Aorta (tissue), 5 donors: ENCODE measurements at regions of chr10 and their contacts with region 1.

Region 1: GRCh38 chr10:29535012-29535777 is 99.6 kb downstream of the SVIL start:
- DNase-seq: peak; percentile 63 to 82
- ATAC-seq: peak; percentile 61
- H3K4me3 ChIP-seq: no peak overlapping the region
- H3K27ac ChIP-seq: peak overlapping the region in 1 of 2 donors; percentile 73
- H3K4me1 ChIP-seq: peaks cover 0 to 11% of the 10 kb centered on the region in 2 donors
- H3K27me3 ChIP-seq: no peaks in the 10 kb centered on the region

Region 2: DNA sequence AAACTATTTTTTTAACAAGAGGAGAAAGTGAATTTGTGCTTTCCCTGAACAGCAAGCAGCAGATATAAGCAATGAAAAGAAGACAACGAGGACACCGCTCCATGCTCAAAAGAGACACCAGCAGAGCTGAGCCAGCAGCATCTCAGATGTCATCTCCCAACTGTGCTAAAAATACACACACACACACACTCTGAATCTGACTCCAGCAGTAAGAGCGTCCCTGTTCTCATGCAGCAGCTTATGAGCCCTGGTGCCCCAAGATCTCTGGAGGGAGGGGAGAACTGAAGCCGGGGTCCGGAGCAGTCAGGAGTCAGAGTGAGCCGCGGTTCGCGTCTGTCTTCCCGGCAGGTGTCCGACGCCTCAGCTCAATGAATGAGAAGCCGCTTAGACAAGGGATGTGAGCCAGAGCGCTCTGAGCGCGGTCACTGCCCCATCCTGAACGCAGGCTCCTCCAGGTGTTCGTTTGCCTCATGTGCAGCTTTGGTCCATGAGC is 50.3 kb after region 1 on chr10:
- intact Hi-C with region 1: loop called in 1 of 2 experiments (anchors 10 kb)
- DNase-seq: no peak
- ATAC-seq: no peak
- H3K4me3 ChIP-seq: no peak overlapping the region
- H3K27ac ChIP-seq: peak overlapping the region in 1 of 2 donors; percentile 23
- H3K4me1 ChIP-seq: peaks cover 2 to 3% of the 10 kb centered on the region in 2 donors
- H3K27me3 ChIP-seq: no peaks in the 10 kb centered on the region